CD14-positive monocyte (primary cell): ENCODE measurements at regions of chr7 and their contacts with region 1.

Region 1: DNA sequence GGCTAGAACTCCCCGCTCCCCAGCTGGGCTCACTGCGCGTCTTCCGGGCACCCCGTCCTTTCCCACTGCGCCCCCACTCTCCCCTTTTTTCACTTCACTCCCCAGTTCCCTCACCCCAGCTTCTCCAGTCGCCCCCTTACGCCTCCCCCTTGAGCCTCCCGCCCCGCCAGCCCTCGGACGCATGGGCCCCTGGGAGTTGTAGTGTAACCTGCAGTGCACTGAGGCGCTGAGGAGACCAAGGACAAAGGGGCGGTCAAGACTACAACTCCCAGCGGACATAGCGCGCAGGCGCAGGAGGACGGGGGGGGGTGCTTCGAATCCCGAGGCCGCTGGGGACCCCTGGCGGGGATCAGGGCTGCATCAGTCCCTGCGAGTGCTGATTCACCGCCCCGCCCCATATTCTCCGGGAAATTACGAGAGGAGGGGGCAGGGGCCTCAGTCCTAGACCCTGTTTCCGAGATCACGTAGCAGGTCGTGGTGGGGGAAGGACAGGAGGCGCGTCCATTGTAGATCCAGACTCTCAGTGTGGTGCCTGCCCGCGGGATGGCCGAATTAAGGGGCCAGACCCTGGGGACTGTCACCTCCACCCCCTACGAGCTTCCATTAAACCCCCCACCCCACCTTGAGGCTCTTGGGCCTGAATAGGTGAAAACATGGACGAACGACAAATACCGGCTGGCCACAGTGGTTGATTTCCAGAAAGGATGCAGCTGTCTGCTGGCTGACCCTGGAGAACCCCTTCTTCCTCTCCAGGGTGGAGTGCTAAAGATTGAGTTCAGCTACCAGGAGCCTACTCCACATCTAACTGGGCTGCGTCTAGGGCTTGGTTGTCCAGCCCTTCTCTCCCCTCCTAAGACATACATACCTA is 554 bp upstream of the YWHAG start:
- DNase-seq: peak; percentile 94 to 98 (median 97)
- H3K4me3 ChIP-seq: peak overlapping the region; percentile 84 to 99 (median 95)
- H3K4me3 Mint-ChIP-seq: peak overlapping the region; percentile 82 to 87
- H3K27ac ChIP-seq: peak overlapping the region; percentile 99 to 100
- H3K27ac Mint-ChIP-seq: peak overlapping the region; percentile 94 to 99 (median 97)
- H3K4me1 ChIP-seq: peaks cover 50 to 76% of the 10 kb centered on the region in 2 donors
- H3K4me1 Mint-ChIP-seq: peaks cover 56% of the 10 kb centered on the region
- H3K27me3 ChIP-seq: no peaks in the 10 kb centered on the region
- H3K27me3 Mint-ChIP-seq: peaks cover 0 to 3% (median 0%) of the 10 kb centered on the region in 3 donors
- CTCF ChIP-seq: peak; percentile 47

Region 2: GRCh38 chr7:76037310-76037709 is 322.0 kb before region 1 on chr7:
- intact Hi-C with region 1: no loop called
- DNase-seq: no peak
- H3K4me3 ChIP-seq: no peak overlapping the region
- H3K4me3 Mint-ChIP-seq: no peak overlapping the region
- H3K27ac ChIP-seq: no peak overlapping the region
- H3K27ac Mint-ChIP-seq: no peak overlapping the region
- H3K4me1 ChIP-seq: no peaks in the 10 kb centered on the region
- H3K4me1 Mint-ChIP-seq: peaks cover 5% of the 10 kb centered on the region
- H3K27me3 ChIP-seq: no peaks in the 10 kb centered on the region
- H3K27me3 Mint-ChIP-seq: peaks cover 0 to 7% (median 0%) of the 10 kb centered on the region in 3 donors
- CTCF ChIP-seq: no peak

Region 3: GRCh38 chr7:76220185-76221057 is 138.9 kb before region 1 on chr7:
- intact Hi-C with region 1: no loop called
- DNase-seq: no peak
- H3K4me3 ChIP-seq: no peak overlapping the region
- H3K4me3 Mint-ChIP-seq: peak overlapping the region in 1 of 2 donors; percentile 51
- H3K27ac ChIP-seq: no peak overlapping the region
- H3K27ac Mint-ChIP-seq: no peak overlapping the region
- H3K4me1 ChIP-seq: no peaks in the 10 kb centered on the region
- H3K4me1 Mint-ChIP-seq: no peaks in the 10 kb centered on the region
- H3K27me3 ChIP-seq: peaks cover 3 to 11% of the 10 kb centered on the region in 2 donors
- H3K27me3 Mint-ChIP-seq: peaks cover 27 to 46% (median 35%) of the 10 kb centered on the region in 3 donors
- CTCF ChIP-seq: no peak

Region 4: GRCh38 chr7:76314042-76314721 is 45.2 kb before region 1 on chr7:
- intact Hi-C with region 1: loop called in 1 of 2 experiments (anchors 2 kb)
- DNase-seq: peak; percentile 92 to 94 (median 93)
- H3K4me3 ChIP-seq: no peak overlapping the region
- H3K4me3 Mint-ChIP-seq: no peak overlapping the region
- H3K27ac ChIP-seq: no peak overlapping the region
- H3K27ac Mint-ChIP-seq: peak overlapping the region in 1 of 7 donors; percentile 68
- H3K4me1 ChIP-seq: peaks cover 13 to 19% of the 10 kb centered on the region in 2 donors
- H3K4me1 Mint-ChIP-seq: peaks cover 21% of the 10 kb centered on the region
- H3K27me3 ChIP-seq: no peaks in the 10 kb centered on the region
- H3K27me3 Mint-ChIP-seq: no peaks in the 10 kb centered on the region
- CTCF ChIP-seq: peak; percentile 99

Region 5: DNA sequence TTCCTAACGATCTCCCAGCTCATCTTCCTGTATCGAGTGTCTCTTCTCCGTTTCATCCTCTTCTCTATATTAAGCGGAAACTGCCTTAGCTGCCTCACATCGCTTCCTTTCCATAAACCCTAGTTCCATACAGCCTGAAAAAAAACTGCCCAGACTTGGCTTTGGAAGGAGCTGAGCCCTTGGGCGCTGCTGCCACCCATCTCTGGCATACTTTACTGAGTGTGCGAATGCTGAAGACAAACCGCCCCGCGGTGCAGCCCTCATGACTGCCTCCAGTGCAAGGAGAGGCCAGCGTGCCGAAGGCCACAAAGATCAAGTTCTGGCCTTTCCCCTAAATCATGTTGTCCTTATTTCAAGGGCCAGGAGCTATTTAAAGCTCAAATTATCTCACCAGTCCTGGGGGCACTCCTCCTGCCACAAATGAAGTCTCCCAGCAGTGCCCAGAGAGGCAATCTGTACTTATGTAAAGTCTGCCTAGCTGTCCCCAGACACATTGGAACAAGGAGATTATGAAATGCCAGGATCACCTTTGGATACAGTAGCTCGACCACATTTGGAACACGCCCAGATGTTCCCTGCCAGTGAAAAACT is 25.7 kb before region 1 on chr7:
- intact Hi-C with region 1: no loop called
- DNase-seq: peak; percentile 27 to 51 (median 39)
- H3K4me3 ChIP-seq: no peak overlapping the region
- H3K4me3 Mint-ChIP-seq: peak overlapping the region in 1 of 2 donors; percentile 23
- H3K27ac ChIP-seq: peak overlapping the region; percentile 42 to 63
- H3K27ac Mint-ChIP-seq: peak overlapping the region; percentile 68 to 86 (median 75)
- H3K4me1 ChIP-seq: peaks cover 26 to 33% of the 10 kb centered on the region in 2 donors
- H3K4me1 Mint-ChIP-seq: peaks cover 68% of the 10 kb centered on the region
- H3K27me3 ChIP-seq: no peaks in the 10 kb centered on the region
- H3K27me3 Mint-ChIP-seq: no peaks in the 10 kb centered on the region
- CTCF ChIP-seq: no peak

Region 6: GRCh38 chr7:76383089-76383944 is 24.0 kb after region 1 on chr7:
- intact Hi-C with region 1: no loop called
- DNase-seq: no peak
- H3K4me3 ChIP-seq: no peak overlapping the region
- H3K4me3 Mint-ChIP-seq: no peak overlapping the region
- H3K27ac ChIP-seq: no peak overlapping the region
- H3K27ac Mint-ChIP-seq: peak overlapping the region in 3 of 7 donors; percentile 15 to 79 (median 57)
- H3K4me1 ChIP-seq: peaks cover 40% of the 10 kb centered on the region in 2 donors
- H3K4me1 Mint-ChIP-seq: peaks cover 30% of the 10 kb centered on the region
- H3K27me3 ChIP-seq: no peaks in the 10 kb centered on the region
- H3K27me3 Mint-ChIP-seq: peaks cover 0 to 2% (median 0%) of the 10 kb centered on the region in 3 donors
- CTCF ChIP-seq: no peak

Region 7: DNA sequence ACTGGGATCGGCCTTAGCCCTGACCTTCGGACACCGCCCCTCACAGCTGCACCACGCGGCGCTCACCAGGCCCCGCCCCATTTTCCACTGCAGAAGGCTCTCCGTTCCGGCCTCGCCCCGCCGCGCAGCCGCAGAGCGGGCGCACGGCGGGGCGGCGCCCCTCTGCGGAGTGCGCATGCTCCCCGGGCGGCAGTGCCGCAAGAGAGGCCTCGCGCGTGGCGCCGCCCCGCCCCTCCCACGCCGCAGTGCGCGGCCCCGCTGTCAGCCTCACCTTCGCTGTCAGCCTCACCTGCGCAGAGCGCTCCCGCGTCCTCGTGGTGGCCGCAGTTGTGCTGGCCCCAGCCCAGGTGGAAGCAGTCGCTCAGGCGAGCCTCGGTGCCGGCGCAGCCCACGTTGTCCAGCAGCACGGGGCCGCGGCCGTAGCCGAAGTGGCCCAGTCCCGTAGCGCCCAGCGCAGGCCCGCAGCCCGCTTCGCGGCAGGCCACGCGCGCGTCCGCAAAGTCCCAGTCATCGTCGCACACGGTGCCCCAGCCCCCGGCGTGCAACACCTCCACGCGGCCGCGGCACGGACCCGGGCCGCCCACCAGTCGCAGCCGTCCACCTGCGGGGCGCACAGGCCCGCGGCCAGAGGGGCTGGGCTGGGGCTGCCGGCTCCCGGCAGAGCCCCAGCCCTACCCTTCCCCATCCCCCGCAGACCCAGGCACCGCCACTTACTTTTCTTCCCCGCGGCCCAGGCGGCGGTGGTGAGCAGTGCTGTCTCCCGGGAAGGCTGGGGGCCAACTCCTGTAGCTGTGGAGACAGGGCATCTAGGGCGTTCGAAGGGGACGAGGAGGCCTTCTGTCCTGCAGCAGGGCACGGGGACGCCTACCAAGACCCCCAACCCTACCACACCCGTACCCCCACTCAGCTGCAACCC is 34.0 kb after region 1 on chr7:
- intact Hi-C with region 1: loop called (anchors 5 kb)
- DNase-seq: peak; percentile 85 to 86 (median 85)
- H3K4me3 ChIP-seq: peak overlapping the region; percentile 45 to 86 (median 65)
- H3K4me3 Mint-ChIP-seq: peak overlapping the region; percentile 78 to 91
- H3K27ac ChIP-seq: peak overlapping the region; percentile 9 to 69
- H3K27ac Mint-ChIP-seq: peak overlapping the region; percentile 91 to 95 (median 95)
- H3K4me1 ChIP-seq: peaks cover 52 to 64% of the 10 kb centered on the region in 2 donors
- H3K4me1 Mint-ChIP-seq: peaks cover 47% of the 10 kb centered on the region
- H3K27me3 ChIP-seq: no peaks in the 10 kb centered on the region
- H3K27me3 Mint-ChIP-seq: peaks cover 0 to 2% (median 1%) of the 10 kb centered on the region in 3 donors
- CTCF ChIP-seq: no peak